ENCODE measurements at regions of chr16 and their contacts with region 1.

Region 1: GRCh38 chr16:67719778-67720144 is 645 bp upstream of the GFOD2 start:
- DNase-seq: peak; percentile 45 to 72 (median 56)
- ATAC-seq: peak; percentile 85
- H3K4me3 ChIP-seq: peak overlapping the region; percentile 94
- H3K27ac ChIP-seq: peak overlapping the region; percentile 93
- H3K4me1 ChIP-seq: peaks cover 6 to 9% of the 10 kb centered on the region in 2 experiments
- H3K27me3 ChIP-seq: no peaks in the 10 kb centered on the region
- CTCF ChIP-seq: no peak
- EP300 ChIP-seq: peak; percentile 11; the same call in 1 of the 2 replicates
- POLR2A ChIP-seq: no peak
- RAD21 ChIP-seq: no peak

Region 2: DNA sequence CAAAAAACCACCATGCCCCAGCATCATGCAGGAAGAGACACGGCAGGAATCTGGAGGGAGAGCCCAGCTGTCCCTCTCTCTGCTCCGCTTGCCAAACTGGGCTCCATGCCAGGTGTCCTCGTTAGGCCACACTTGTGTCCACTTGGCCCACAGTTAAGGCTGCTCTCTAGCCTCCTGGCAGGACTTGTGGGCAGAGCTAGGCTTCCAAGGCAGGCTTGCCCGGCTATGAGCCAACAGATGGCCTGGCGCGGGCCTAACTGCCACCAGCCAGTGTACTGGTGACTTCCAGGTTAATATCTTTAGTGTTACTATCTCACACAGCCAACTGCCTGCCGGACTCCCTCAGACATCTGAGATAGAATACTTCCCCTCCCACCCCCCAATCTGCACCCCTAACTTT is 249.4 kb before region 1 on chr16:
- CTCF ChIA-PET with region 1: no interaction called
- POLR2A ChIA-PET with region 1: no interaction called
- in situ Hi-C with region 1: no loop called
- intact Hi-C with region 1: no loop called
- DNase-seq: no peak
- ATAC-seq: no peak
- H3K4me3 ChIP-seq: no peak overlapping the region
- H3K27ac ChIP-seq: no peak overlapping the region
- H3K4me1 ChIP-seq: peaks cover 15 to 20% of the 10 kb centered on the region in 2 experiments
- H3K27me3 ChIP-seq: no peaks in the 10 kb centered on the region
- CTCF ChIP-seq: no peak
- EP300 ChIP-seq: no peak
- POLR2A ChIP-seq: no peak
- RAD21 ChIP-seq: no peak

Region 3: DNA sequence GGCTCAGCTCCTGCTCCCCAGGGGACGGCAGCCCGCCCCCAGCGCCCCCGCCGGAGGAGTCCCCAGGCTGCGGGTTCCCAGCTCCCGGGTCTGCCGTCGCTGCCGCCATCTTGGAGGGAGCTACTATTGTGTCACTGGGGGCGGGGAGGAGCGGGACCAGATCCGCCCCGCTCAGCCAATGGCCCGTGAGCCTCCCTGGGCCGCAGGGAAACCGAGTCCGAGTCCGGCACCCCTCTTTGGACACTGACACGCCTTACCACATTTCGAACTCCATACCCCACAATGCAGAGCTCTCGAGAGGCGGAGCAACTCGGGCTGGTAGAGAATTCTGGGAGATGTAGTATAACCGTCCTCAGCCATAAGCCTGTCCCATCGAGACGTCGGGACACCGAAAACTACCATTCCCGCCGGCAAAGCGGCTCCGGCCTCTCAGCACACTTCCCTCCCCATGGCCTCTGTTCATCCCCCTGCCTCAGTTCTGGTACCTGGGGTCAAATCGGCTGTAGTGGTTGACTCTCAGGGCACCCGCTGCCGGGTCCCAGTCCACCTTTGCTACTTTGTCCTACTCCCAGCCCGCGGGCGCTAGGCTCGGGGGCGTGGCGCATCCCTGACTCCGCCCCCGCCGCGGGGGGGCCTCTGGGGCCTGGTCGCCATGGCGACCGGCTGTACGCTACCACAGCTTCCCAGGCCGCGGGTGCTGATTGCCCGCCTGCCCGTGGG is 86.8 kb after region 1 on chr16 and contains the starts of genes RANBP10 and TSNAXIP1:
- CTCF ChIA-PET with region 1: no interaction called
- POLR2A ChIA-PET with region 1: interaction called, 4 read pairs
- in situ Hi-C with region 1: no loop called
- intact Hi-C with region 1: loop called (anchors 1 kb)
- DNase-seq: peak; percentile 94 to 99 (median 96)
- ATAC-seq: peak; percentile 99
- H3K4me3 ChIP-seq: peak within 1 kb of the TSS; percentile 98
- H3K27ac ChIP-seq: peak within 1 kb of the TSS; percentile 86
- H3K4me1 ChIP-seq: peaks cover 15 to 18% of the 10 kb centered on the region in 2 experiments; a peak in 4 of 5 replicates
- H3K27me3 ChIP-seq: no peaks in the 10 kb centered on the region
- CTCF ChIP-seq: no peak
- EP300 ChIP-seq: no peak
- POLR2A ChIP-seq: peak; percentile 87
- RAD21 ChIP-seq: no peak; a peak in 1 of 4 replicates
- polyA plus RNA-seq, gene RANBP10: 0.61 to 1.4 TPM
- polyA plus RNA-seq, gene TSNAXIP1: 0.03 TPM in 1 of 2 experiments, not detected in the other

Region 4: DNA sequence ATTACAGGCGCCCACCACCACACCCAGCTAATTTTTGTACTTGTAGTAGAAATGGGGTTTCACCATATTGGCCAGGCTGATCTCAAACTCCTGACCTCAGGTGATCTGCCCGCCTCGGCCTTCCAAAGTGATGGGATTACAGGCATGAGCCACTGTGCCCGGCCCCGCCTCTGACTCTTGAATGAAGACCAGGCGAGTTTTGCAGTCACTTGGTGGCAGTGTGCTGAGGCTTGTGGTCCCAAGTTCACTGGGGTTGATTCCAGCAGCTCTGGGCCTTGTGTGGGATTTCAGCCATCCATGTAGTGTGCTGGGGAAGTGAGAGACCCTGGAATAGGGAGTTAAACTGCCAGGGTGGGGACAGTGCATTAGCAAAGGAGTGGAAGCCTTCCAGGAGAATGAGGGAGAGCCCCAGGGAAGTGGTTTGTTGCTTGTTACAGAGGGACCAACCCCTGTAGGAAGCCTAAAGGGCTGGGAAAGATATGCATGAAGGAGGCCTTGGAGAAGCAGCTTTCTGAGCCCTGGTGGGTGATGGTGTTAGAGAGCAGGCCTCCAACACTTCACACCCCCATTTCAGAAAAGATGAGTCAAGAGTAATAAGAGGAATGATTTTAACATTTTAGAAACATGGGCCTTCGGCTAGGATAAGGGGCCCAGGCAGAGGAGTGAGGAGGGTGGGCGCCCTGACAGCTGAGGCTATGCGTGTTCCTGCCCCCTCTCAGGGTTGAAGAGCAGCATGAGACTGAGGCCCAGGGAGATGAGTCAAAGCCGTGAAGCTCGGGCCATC is 187.8 kb after region 1 on chr16:
- CTCF ChIA-PET with region 1: no interaction called
- POLR2A ChIA-PET with region 1: no interaction called
- in situ Hi-C with region 1: no loop called
- intact Hi-C with region 1: no loop called
- DNase-seq: no peak
- ATAC-seq: no peak
- H3K4me3 ChIP-seq: no peak overlapping the region
- H3K27ac ChIP-seq: no peak overlapping the region
- H3K4me1 ChIP-seq: peaks cover 0 to 6% of the 10 kb centered on the region in 2 experiments; a peak in 1 of 5 replicates
- H3K27me3 ChIP-seq: no peaks in the 10 kb centered on the region
- CTCF ChIP-seq: no peak
- EP300 ChIP-seq: no peak
- POLR2A ChIP-seq: no peak
- RAD21 ChIP-seq: no peak

Measured in K562 (cell line).